Dorsolateral prefrontal cortex (tissue), 120 donors: ENCODE measurements at regions of chr7 and their contacts with region 1.

Region 1: GRCh38 chr7:32204361-32205018 is 134.3 kb upstream of the PDE1C start:
- DNase-seq: peak; percentile 68 to 93 (median 88)
- H3K4me3 ChIP-seq: peak overlapping the region in 58 of 59 donors; percentile 14 to 68 (median 44)
- H3K27ac ChIP-seq: peak overlapping the region in 9 of 59 donors; percentile 5 to 70 (median 26)
- H3K27me3 ChIP-seq: peaks cover 0 to 9% (median 0%) of the 10 kb centered on the region in 45 donors
- CTCF ChIP-seq: peak; percentile 77 to 99 (median 97)

Region 2: DNA sequence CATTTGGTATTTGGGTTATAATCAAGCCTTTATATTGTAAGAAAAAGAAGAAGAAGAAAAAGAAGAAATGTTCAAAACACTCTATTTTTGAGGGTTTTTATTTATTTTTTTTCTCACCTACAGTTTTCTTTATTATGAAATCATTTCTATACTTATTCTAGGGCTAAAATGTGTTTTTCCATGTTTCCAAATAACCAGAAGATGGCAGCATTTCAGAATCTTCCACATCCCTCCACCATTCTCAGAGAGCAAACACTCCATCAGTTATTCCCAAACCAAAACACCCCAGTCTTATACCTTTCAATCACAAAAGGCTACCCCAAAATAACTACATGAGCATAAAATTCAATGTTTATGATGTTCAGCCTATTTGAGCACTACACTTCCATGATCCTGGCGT is 556.2 kb before region 1 on chr7:
- intact Hi-C with region 1: loop called (anchors 5 to 10 kb)
- DNase-seq: no peak
- H3K4me3 ChIP-seq: no peak overlapping the region
- H3K27ac ChIP-seq: no peak overlapping the region
- H3K27me3 ChIP-seq: peaks cover 0 to 4% (median 0%) of the 10 kb centered on the region in 45 donors
- CTCF ChIP-seq: peak in 54 of 56 donors; percentile 23 to 74 (median 53)

Region 3: GRCh38 chr7:31883761-31884164 is 320.7 kb before region 1 on chr7:
- intact Hi-C with region 1: loop called in 1 of 2 experiments (anchors 10 kb)
- DNase-seq: peak in 9 of 10 donors; percentile 13 to 73 (median 60)
- H3K4me3 ChIP-seq: peak overlapping the region in 19 of 59 donors; percentile 3 to 46 (median 12)
- H3K27ac ChIP-seq: peak overlapping the region in 56 of 59 donors; percentile 0 to 83 (median 71)
- H3K27me3 ChIP-seq: no peaks in the 10 kb centered on the region
- CTCF ChIP-seq: peak in 7 of 56 donors; percentile 8 to 25 (median 12)

Region 4: DNA sequence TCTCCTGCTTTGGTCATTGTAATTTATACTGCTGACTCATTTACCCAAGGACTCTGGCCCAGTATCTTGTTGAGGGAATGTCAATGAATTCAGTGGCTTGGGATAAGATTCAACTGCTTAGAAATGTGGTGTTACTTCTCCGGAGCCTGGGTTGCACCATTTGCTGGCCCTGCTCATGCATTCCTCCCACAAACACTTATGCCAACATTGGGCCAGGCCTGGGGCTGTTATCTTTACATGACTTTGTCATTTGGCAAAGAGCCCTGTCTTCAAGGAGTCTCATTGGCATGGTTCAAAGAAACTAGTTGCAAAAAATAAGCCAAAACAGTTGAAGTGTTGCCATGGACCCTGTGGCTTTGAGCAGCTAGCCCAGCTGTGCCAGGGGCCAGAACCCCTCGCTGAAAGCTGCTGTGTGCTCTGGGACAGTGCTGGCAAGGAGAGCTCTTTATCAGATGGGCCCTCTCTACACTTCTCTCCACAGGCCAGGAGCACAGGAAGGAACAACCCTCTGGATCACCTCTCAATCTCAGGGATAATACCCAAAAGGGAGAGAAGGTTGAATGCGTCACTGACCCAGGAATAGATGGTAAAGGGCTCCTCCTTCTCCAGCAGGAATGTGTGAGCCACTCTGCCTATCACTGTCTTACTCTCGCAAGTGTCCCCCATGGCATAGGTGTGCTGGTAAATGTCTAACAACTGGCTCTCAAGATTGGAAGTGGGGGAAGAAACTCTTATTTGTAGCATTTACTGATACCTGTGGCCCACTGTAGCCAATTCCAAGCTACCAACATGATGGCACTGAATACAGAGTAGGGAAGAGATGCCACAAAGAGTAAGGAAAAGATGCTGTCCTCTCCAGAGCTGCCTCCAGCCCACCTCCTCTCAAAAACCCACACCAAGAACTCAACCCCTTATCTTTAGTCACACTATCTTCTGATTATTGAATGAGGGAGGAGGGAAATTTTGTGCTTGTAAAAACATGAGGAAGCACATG is 110.8 kb before region 1 on chr7:
- intact Hi-C with region 1: no loop called
- DNase-seq: no peak
- H3K4me3 ChIP-seq: no peak overlapping the region
- H3K27ac ChIP-seq: no peak overlapping the region
- H3K27me3 ChIP-seq: no peaks in the 10 kb centered on the region
- CTCF ChIP-seq: no peak

Region 5: DNA sequence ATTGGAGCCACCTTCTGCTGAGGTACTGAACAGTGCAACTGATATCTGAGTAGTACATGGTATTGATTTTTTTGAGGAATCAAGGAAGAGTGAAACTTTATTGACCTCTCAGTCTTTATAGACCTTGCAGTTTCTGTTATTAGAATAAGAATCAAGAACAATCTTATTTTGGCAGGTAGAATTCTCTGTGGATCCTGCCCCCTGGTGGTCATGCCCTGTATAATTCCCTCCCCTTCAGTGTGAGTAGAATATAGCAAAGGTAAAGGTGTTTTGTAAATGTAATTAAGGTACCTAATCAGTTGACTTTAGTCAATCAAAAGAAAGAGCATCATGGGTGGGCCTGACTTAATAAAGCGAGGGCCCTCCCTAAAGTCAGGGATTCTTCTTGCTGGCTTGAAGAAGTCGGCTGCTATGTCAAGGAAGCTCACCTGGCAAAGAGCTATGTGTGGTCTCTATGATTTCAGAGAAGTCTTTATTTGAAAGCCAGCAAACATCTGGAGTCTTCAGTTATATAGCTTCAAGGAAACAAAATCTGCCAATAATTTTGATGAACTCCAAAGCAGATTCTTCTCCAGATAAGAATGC is 142.8 kb after region 1 on chr7:
- intact Hi-C with region 1: loop called in 1 of 2 experiments (anchors 5 kb)
- DNase-seq: peak in 1 of 10 donors; percentile 46
- H3K4me3 ChIP-seq: no peak overlapping the region
- H3K27ac ChIP-seq: no peak overlapping the region
- H3K27me3 ChIP-seq: no peaks in the 10 kb centered on the region
- CTCF ChIP-seq: peak; percentile 54 to 89 (median 74)